ENCODE measurements at regions of chr1 and their contacts with region 1.

Region 1: GRCh38 chr1:108125312-108126138 is 74.6 kb downstream of the SLC25A24 start:
- DNase-seq: peak; percentile 79
- H3K4me3 ChIP-seq: no peak overlapping the region; a peak in 1 of 4 replicates
- H3K27ac ChIP-seq: no peak overlapping the region
- H3K4me1 ChIP-seq: no peaks in the 10 kb centered on the region
- H3K27me3 ChIP-seq: no peaks in the 10 kb centered on the region
- CTCF ChIP-seq: peak; percentile 89
- EP300 ChIP-seq: no peak
- RAD21 ChIP-seq: peak; percentile 100

Region 2: DNA sequence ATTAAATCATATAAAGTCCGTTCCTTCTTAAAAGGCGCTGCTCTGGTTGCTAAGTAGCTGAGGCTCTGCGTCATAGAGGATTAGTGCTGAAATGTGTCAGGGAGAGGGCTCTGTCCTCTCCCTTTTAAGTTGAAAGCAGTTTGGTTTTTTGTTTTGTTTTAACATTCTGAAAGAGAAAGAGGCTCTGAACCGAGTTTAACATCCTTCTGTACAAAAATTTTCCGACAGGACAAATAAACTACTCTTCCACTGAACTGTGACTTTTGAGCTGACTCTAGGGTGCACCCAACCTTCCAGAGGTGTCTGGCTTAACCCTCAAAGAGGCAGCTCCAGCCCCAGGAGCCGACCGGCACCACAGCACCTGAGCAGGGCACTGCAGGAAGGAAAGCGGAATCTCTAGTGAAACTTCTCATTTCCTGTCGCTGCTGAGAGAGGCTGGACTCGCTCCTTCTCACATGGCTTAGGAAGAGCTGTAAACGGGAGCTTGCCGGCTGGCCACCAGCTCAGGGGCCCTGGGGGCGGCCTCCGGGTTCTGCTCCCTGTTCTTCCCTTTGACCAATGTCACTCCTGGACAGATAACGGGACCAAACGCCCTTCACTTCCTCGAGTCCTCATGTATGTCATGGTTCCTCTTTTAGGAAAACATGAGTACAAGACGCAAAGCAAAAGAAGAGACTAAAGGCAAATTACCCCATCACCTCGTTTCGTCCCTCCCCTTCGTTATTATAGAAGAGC is 161.8 kb before region 1 on chr1:
- CTCF ChIA-PET with region 1: interaction called, 10 read pairs
- POLR2A ChIA-PET with region 1: no interaction called
- DNase-seq: peak; percentile 23
- H3K4me3 ChIP-seq: no peak overlapping the region
- H3K27ac ChIP-seq: no peak overlapping the region
- H3K4me1 ChIP-seq: peaks cover 0 to 9% of the 10 kb centered on the region in 2 experiments; a peak in 1 of 4 replicates
- H3K27me3 ChIP-seq: peaks cover 19% of the 10 kb centered on the region
- CTCF ChIP-seq: no peak
- EP300 ChIP-seq: no peak
- RAD21 ChIP-seq: no peak

Region 3: GRCh38 chr1:108075055-108075454 is 50.5 kb before region 1 on chr1:
- CTCF ChIA-PET with region 1: no interaction called
- POLR2A ChIA-PET with region 1: no interaction called
- DNase-seq: no peak
- H3K4me3 ChIP-seq: no peak overlapping the region
- H3K27ac ChIP-seq: no peak overlapping the region
- H3K4me1 ChIP-seq: no peaks in the 10 kb centered on the region; a peak in 1 of 4 replicates
- H3K27me3 ChIP-seq: no peaks in the 10 kb centered on the region
- CTCF ChIP-seq: no peak
- EP300 ChIP-seq: no peak
- RAD21 ChIP-seq: no peak

Region 4: DNA sequence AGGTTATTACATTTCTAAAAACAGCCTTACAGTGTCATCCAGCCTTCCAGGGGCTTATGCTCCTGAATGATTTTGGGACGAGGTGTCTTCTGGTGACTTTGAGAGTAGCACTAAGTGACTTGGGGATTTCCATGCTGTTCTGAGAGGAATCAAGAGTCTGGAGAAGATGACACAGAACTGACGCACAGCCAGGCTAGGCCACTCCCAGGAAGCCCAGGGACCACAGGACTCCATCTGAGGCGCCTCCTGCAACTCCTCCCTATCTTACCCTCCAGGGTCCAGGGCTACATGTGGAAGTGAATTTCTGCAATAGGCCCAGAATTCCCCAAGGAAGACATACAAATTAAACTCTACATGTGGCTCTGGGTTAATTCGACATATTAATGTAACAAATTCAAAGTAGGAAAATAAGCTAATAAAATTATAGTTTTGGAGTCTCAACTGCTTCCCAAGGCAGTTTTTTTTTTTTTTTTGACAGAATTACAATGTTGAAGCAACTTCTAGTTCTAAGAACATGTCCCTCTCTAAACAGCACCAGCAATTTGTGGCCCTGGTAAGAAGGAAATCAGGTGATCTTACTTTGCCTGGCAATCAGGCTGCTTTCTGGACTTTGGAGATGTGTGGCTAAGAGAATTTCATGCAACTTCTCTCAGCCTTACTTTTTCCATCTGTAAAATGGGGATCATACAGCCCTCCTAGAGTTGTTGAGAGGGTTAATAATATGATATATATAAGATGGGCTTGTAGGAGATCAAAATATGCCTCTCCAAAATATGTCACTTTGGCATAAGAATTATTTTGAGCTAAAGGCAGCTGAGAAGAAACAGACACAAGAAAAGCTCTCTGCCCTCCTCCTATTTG is 17.6 kb before region 1 on chr1:
- CTCF ChIA-PET with region 1: interaction called, 12 read pairs
- POLR2A ChIA-PET with region 1: no interaction called
- DNase-seq: no peak
- H3K4me3 ChIP-seq: no peak overlapping the region
- H3K27ac ChIP-seq: no peak overlapping the region
- H3K4me1 ChIP-seq: no peaks in the 10 kb centered on the region; a peak in 1 of 4 replicates
- H3K27me3 ChIP-seq: no peaks in the 10 kb centered on the region
- CTCF ChIP-seq: no peak
- EP300 ChIP-seq: no peak
- RAD21 ChIP-seq: no peak

Region 5: GRCh38 chr1:108114033-108114599 is 11.4 kb before region 1 on chr1:
- CTCF ChIA-PET with region 1: interaction called, 13 read pairs
- POLR2A ChIA-PET with region 1: no interaction called
- DNase-seq: no peak
- H3K4me3 ChIP-seq: no peak overlapping the region
- H3K27ac ChIP-seq: no peak overlapping the region
- H3K4me1 ChIP-seq: peaks cover 5 to 8% of the 10 kb centered on the region in 2 experiments; a peak in 3 of 4 replicates
- H3K27me3 ChIP-seq: no peaks in the 10 kb centered on the region
- CTCF ChIP-seq: no peak
- EP300 ChIP-seq: no peak
- RAD21 ChIP-seq: no peak

Region 6: GRCh38 chr1:108141621-108142020 is 16.1 kb after region 1 on chr1:
- CTCF ChIA-PET with region 1: interaction called, 22 read pairs
- POLR2A ChIA-PET with region 1: no interaction called
- DNase-seq: no peak
- H3K4me3 ChIP-seq: no peak overlapping the region
- H3K27ac ChIP-seq: no peak overlapping the region
- H3K4me1 ChIP-seq: no peaks in the 10 kb centered on the region
- H3K27me3 ChIP-seq: no peaks in the 10 kb centered on the region
- CTCF ChIP-seq: no peak
- EP300 ChIP-seq: no peak
- RAD21 ChIP-seq: no peak

Region 7: GRCh38 chr1:108732398-108732797 is 606.9 kb after region 1 on chr1:
- CTCF ChIA-PET with region 1: no interaction called
- POLR2A ChIA-PET with region 1: no interaction called
- DNase-seq: no peak
- H3K4me3 ChIP-seq: no peak overlapping the region
- H3K27ac ChIP-seq: no peak overlapping the region
- H3K4me1 ChIP-seq: peaks cover 0 to 3% of the 10 kb centered on the region in 2 experiments; a peak in 1 of 4 replicates
- H3K27me3 ChIP-seq: no peaks in the 10 kb centered on the region
- CTCF ChIP-seq: no peak
- EP300 ChIP-seq: no peak
- RAD21 ChIP-seq: no peak